ENCODE measurements at regions of chr12 and their contacts with region 1.

Region 1: GRCh38 chr12:68648179-68648578 is 37.5 kb downstream of the RAP1B start:
- DNase-seq: no peak
- ATAC-seq: no peak
- H3K4me3 ChIP-seq: no peak overlapping the region
- H3K4me3 Mint-ChIP-seq: no peak overlapping the region
- H3K27ac ChIP-seq: peak overlapping the region; percentile 38
- H3K27ac Mint-ChIP-seq: peak overlapping the region; percentile 63 to 79
- H3K4me1 ChIP-seq: peaks cover 5 to 24% of the 10 kb centered on the region in 2 experiments
- H3K4me1 Mint-ChIP-seq: peaks cover 56 to 63% (median 57%) of the 10 kb centered on the region in 3 donors
- H3K27me3 ChIP-seq: no peaks in the 10 kb centered on the region
- H3K27me3 Mint-ChIP-seq: no peaks in the 10 kb centered on the region

Region 2: DNA sequence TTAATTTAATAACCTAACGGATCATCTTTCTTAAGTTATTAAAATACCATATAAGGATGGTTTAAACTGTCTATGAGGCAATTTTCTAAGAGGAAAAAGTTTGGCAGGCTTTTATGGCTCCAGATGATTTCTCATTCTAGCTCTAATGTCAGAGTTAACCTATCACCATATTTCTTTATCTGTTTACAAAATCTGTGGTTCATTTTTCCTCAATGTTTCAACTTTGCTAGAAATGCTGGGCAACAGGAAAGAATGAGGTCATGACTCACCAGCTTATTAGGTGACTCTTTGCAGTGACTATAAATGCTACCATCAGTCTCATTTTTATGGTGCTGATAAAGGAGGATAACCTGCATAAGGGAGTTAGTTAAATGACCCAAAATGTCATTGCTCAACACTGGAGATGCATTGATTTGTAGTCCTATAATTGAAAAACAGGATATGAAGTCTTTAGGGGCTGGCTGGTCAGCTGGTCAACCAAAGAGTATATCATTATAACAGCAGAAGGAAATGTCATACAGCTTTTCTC is 82.7 kb before region 1 on chr12:
- CTCF ChIA-PET with region 1: no interaction called
- POLR2A ChIA-PET with region 1: no interaction called
- DNase-seq: peak in 1 of 35 experiments; percentile 19
- ATAC-seq: peak in 3 of 4 experiments; percentile 31 to 58 (median 55)
- H3K4me3 ChIP-seq: no peak overlapping the region
- H3K4me3 Mint-ChIP-seq: no peak overlapping the region
- H3K27ac ChIP-seq: no peak overlapping the region
- H3K27ac Mint-ChIP-seq: no peak overlapping the region
- H3K4me1 ChIP-seq: peaks cover 5 to 13% of the 10 kb centered on the region in 2 experiments
- H3K4me1 Mint-ChIP-seq: peaks cover 21 to 22% (median 22%) of the 10 kb centered on the region in 3 donors
- H3K27me3 ChIP-seq: no peaks in the 10 kb centered on the region
- H3K27me3 Mint-ChIP-seq: no peaks in the 10 kb centered on the region

Region 3: DNA sequence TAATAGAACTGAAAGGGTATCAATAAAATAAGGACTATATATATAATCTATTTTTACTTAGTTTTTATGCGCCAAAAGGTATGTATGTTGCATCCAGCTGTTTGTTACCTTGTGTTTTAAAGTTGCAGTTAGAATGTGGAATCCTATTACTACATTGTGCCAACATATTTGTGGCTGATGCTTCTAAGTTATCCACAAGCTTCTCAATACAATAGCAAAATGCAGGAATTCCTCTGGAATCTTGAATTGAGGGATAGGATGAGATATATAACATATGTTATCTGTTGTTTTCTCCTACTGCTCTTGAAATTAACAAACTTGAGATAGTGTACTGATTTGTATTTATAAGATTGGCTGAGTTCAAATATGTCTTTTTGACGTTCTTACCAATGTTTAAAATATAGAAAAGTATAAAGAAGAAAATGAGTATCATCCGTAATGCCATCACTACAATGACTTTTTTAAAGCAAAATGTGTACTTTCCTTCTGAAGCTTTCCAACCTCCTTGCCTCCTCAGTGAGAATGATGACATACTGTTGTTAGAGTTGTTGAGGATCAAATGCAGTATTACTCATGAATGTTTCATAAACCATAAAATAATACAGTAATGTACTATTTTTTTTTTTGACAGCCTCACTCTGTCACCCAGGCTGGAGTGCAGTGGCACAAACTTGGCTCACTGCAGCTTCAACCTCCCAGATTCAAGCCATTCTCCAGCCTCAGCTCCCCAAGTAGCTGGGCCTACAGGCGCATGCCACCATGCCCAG is 30.8 kb before region 1 on chr12:
- CTCF ChIA-PET with region 1: interaction called in 1 of 2 experiments, 6 read pairs
- POLR2A ChIA-PET with region 1: interaction called, 5 to 18 read pairs
- DNase-seq: no peak
- ATAC-seq: no peak
- H3K4me3 ChIP-seq: peak overlapping the region in 1 of 2 donors; percentile 32
- H3K4me3 Mint-ChIP-seq: peak overlapping the region; percentile 14 to 100 (median 15)
- H3K27ac ChIP-seq: no peak overlapping the region
- H3K27ac Mint-ChIP-seq: peak overlapping the region; percentile 43 to 58
- H3K4me1 ChIP-seq: peaks cover 52 to 66% of the 10 kb centered on the region in 2 experiments
- H3K4me1 Mint-ChIP-seq: peaks cover 81 to 90% (median 84%) of the 10 kb centered on the region in 3 donors
- H3K27me3 ChIP-seq: no peaks in the 10 kb centered on the region
- H3K27me3 Mint-ChIP-seq: no peaks in the 10 kb centered on the region

Measured in T-cell (primary cell).